ENCODE measurements at regions of chr5 and their contacts with region 1.

Region 1: DNA sequence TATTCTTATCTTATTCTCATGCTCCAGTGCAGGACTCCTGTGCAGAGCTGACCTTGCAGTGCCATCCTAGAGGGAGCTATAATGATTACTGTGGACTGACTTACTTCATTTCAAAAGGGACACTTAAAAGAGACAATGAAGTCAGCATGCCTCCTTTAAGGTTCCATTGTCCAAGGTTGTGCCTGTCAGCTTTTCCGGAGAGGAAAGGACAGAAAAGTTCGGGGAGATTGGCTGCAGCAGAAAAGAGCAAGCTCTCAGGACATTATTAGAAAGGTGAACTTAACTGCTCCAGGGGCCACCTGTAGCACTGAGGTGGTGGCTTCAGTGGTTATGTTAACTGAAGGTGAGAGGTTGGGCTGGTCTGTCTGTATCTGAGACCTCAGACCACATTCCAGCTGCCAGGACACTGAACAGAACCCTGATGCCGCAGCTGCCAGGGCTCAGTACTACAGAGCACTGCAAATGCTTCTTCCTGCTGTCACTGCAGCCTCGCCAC is 112.9 kb downstream of the ST8SIA4 start:
- DNase-seq: no peak
- ATAC-seq: no peak
- H3K4me3 ChIP-seq: no peak overlapping the region
- H3K27ac ChIP-seq: no peak overlapping the region
- H3K4me1 ChIP-seq: no peaks in the 10 kb centered on the region
- H3K27me3 ChIP-seq: no peaks in the 10 kb centered on the region
- CTCF ChIP-seq: no peak

Region 2: GRCh38 chr5:100746730-100747129 is 43.5 kb before region 1 on chr5:
- intact Hi-C with region 1: no loop called
- DNase-seq: no peak
- ATAC-seq: no peak
- H3K4me3 ChIP-seq: no peak overlapping the region
- H3K27ac ChIP-seq: no peak overlapping the region
- H3K4me1 ChIP-seq: no peaks in the 10 kb centered on the region
- H3K27me3 ChIP-seq: no peaks in the 10 kb centered on the region
- CTCF ChIP-seq: no peak

Region 3: GRCh38 chr5:100828071-100828897 is 38.1 kb after region 1 on chr5:
- intact Hi-C with region 1: loop called in 1 of 2 experiments (anchors 2 kb)
- DNase-seq: no peak
- ATAC-seq: no peak
- H3K4me3 ChIP-seq: no peak overlapping the region
- H3K27ac ChIP-seq: peak overlapping the region; percentile 43
- H3K4me1 ChIP-seq: no peaks in the 10 kb centered on the region
- H3K27me3 ChIP-seq: no peaks in the 10 kb centered on the region
- CTCF ChIP-seq: no peak

Measured in psoas muscle (tissue), 8 donors.